Gastrocnemius medialis (tissue), 4 donors: ENCODE measurements at regions of chr12 and their contacts with region 1.

Region 1: DNA sequence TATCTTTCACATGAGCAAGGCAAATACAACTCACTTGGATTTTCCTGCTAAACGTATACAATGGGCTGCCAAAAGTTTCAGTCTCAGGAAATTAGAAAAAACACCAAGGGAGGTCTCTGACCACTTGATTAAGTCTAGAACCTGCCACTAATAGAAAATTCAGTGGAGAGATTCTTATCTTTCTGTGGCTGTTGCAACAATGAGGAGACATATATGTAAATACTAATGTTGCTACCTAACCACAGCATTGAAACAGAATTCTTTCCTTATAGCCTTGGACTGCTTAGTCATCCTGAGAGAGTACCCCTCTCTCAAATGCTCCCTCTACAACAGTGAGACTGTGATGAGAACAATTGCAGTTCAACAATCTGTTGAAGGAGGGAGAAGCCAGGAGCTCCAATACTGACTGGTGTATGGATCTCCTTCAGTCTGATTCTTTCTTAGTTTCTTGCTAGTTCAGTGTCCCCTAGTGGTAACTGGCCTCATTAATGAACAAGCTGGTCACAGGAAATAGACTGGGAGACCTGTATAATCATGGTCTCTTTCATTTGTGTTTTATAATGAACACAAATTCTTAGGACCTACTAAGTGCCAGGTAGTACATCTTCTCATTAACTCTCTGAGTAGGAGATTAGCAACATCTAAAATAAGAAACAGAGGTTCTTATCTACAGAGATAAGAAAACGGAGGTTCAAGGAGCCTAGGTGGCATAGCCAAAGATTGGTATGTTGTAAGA is 164.5 kb downstream of the SLC38A4 start:
- DNase-seq: no peak
- ATAC-seq: peak; percentile 67 to 68
- H3K4me3 ChIP-seq: peak overlapping the region in 1 of 4 donors; percentile 42
- H3K27ac ChIP-seq: peak overlapping the region; percentile 67 to 80 (median 74)
- H3K4me1 ChIP-seq: peaks cover 57 to 78% of the 10 kb centered on the region in 2 donors
- H3K27me3 ChIP-seq: no peaks in the 10 kb centered on the region
- CTCF ChIP-seq: peak; percentile 58 to 89 (median 72)
- POLR2A ChIP-seq: peak in 1 of 2 donors; percentile 9

Region 2: GRCh38 chr12:46124848-46125619 is 536.2 kb before region 1 on chr12:
- in situ Hi-C with region 1: loop called in 1 of 4 experiments (anchors 10 kb)
- intact Hi-C with region 1: loop called (anchors 10 kb)
- DNase-seq: peak in 1 of 2 donors; percentile 41
- ATAC-seq: peak; percentile 88 to 94
- H3K4me3 ChIP-seq: peak overlapping the region in 1 of 4 donors; percentile 18
- H3K27ac ChIP-seq: no peak overlapping the region
- H3K4me1 ChIP-seq: no peaks in the 10 kb centered on the region
- H3K27me3 ChIP-seq: no peaks in the 10 kb centered on the region
- CTCF ChIP-seq: peak; percentile 59 to 85 (median 65)
- POLR2A ChIP-seq: no peak

Region 3: GRCh38 chr12:46342562-46343033 is 318.7 kb before region 1 on chr12:
- in situ Hi-C with region 1: no loop called
- intact Hi-C with region 1: loop called (anchors 5 kb)
- DNase-seq: no peak
- ATAC-seq: peak; percentile 80 to 87
- H3K4me3 ChIP-seq: no peak overlapping the region
- H3K27ac ChIP-seq: no peak overlapping the region
- H3K4me1 ChIP-seq: peaks cover 4 to 5% of the 10 kb centered on the region in 2 donors
- H3K27me3 ChIP-seq: no peaks in the 10 kb centered on the region
- CTCF ChIP-seq: peak; percentile 56 to 79 (median 66)
- POLR2A ChIP-seq: no peak

Region 4: DNA sequence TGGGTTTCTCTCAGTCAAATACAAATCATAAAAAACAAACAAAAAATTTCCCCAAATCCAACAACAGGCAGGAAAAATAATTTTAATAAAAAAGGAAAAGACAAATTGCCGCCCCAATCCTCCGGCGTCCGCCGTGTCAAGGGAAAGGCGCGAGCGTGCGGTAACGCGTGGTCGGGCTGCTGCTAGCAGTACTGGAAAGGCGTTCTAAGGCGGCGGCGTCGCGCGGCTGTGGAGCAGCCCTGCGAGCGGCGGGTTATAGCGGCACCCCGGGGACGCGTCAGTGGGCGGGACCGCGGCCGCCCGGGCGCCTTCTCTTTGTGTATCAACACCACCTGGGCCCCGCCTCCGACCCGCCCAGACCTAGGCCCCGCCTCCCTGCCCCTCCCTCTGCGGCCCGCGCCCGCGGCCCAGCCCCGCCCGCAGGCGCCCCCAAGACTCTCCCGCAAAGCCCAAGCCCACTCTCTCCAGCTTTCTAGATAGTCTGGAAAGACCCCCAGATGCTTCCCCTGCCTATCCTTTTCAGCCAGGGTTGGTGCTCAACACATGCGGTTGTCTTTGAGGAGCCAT is 288.7 kb before region 1 on chr12 and contains the start of gene SLC38A2:
- in situ Hi-C with region 1: loop called in 2 of 4 experiments (anchors 10 to 25 kb)
- intact Hi-C with region 1: loop called (anchors 2 kb)
- DNase-seq: peak; percentile 97 to 98
- ATAC-seq: peak; percentile 69 to 71
- H3K4me3 ChIP-seq: peak within 1 kb of the TSS; percentile 68 to 87 (median 80)
- H3K27ac ChIP-seq: peak within 1 kb of the TSS; percentile 93 to 97 (median 95)
- H3K4me1 ChIP-seq: peaks cover 38 to 46% of the 10 kb centered on the region in 2 donors
- H3K27me3 ChIP-seq: no peaks in the 10 kb centered on the region
- CTCF ChIP-seq: no peak
- POLR2A ChIP-seq: peak; percentile 100
- total RNA-seq, gene SLC38A2: 260 to 853 (median 400) TPM

Region 5: GRCh38 chr12:46473634-46474329 is 187.5 kb before region 1 on chr12:
- in situ Hi-C with region 1: no loop called
- intact Hi-C with region 1: loop called (anchors 5 kb)
- DNase-seq: peak; percentile 4 to 49
- ATAC-seq: peak; percentile 66 to 69
- H3K4me3 ChIP-seq: peak overlapping the region in 3 of 4 donors; percentile 4 to 23 (median 10)
- H3K27ac ChIP-seq: peak overlapping the region; percentile 75 to 80 (median 78)
- H3K4me1 ChIP-seq: peaks cover 37 to 41% of the 10 kb centered on the region in 2 donors
- H3K27me3 ChIP-seq: no peaks in the 10 kb centered on the region
- CTCF ChIP-seq: no peak
- POLR2A ChIP-seq: no peak

Region 6: GRCh38 chr12:46617167-46617566 is 44.1 kb before region 1 on chr12:
- in situ Hi-C with region 1: no loop called
- intact Hi-C with region 1: loop called (anchors 5 kb)
- DNase-seq: peak; percentile 86 to 92
- ATAC-seq: peak; percentile 100
- H3K4me3 ChIP-seq: peak overlapping the region; percentile 19 to 38 (median 34)
- H3K27ac ChIP-seq: peak overlapping the region; percentile 77 to 87 (median 80)
- H3K4me1 ChIP-seq: peaks cover 11 to 12% of the 10 kb centered on the region in 2 donors
- H3K27me3 ChIP-seq: no peaks in the 10 kb centered on the region
- CTCF ChIP-seq: no peak
- POLR2A ChIP-seq: no peak